ENCODE measurements at regions of chr5 and their contacts with region 1.

Region 1: DNA sequence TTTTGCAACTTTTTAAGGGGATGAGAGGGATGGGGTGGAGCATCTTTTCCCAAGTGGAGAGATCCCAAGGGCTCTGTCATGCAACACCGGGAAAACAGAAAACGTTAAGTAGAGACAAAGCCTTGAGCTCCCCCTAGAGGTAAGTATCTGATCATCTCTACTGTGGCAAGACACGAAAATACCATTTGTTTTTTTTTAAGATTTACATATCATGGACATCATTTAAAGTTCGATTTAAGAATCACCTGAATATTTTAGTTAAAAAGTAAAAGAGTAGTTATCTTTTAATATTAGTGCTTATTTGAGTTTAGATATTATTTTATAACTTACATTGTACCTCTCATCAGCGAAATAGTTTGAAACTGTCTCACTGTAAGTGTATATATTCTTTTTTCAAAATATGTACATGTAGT is 200.4 kb downstream of the LRRC70 start:
- DNase-seq: peak; percentile 30
- H3K4me3 Mint-ChIP-seq: no peak overlapping the region
- H3K27ac Mint-ChIP-seq: no peak overlapping the region
- H3K4me1 Mint-ChIP-seq: no peaks in the 10 kb centered on the region
- H3K27me3 Mint-ChIP-seq: no peaks in the 10 kb centered on the region
- CTCF ChIP-seq: peak; percentile 53

Region 2: DNA sequence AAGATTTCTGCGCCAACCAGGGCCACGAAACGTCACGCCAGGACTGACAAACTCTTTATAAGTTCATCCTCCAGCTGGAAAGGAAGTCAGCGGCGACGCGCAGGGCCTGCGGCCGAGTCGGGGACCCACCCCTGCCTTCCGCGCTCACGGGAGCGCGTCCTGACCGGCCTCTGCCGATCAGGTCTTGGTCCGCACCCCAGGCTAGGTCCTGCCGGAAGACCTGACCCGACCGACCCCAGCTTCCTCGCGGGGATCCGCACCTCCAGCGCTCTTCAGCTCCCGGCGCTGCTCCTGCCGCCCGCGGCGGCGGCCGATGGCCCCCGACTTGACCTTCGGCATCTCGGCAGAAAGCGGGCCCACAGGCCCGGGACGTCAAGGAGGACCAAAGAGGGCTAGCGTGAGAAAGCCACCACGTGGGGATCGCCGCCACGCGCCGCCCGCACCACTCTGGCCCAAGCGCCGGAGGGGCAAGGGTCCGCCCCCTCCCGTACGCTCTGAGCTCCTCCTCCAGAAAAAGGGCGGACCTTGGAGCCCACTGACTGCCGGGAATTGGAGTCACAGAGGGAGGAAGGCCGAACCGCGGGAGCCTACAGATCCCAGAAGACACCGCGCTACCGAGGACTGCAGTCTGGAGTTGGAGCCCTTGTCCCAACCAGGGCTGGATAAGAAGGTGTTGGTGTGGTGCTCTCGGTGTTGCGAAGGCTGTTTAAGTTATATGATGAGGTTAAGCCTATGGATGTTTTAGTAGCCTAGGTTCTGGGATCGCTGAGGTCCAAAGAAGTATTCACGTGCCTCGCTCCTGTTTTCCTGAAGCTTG is 375.4 kb before region 1 on chr5 and contains the start of gene DIMT1:
- CTCF ChIA-PET with region 1: interaction called, 10 read pairs
- intact Hi-C with region 1: no loop called
- DNase-seq: peak; percentile 95
- H3K4me3 Mint-ChIP-seq: peak within 1 kb of the TSS; percentile 99
- H3K27ac Mint-ChIP-seq: peak within 1 kb of the TSS; percentile 96
- H3K4me1 Mint-ChIP-seq: peaks cover 13% of the 10 kb centered on the region
- H3K27me3 Mint-ChIP-seq: no peaks in the 10 kb centered on the region
- CTCF ChIP-seq: no peak
- total RNA-seq, gene DIMT1: 34.4 and 41.1 TPM in 2 replicates

Region 3: DNA sequence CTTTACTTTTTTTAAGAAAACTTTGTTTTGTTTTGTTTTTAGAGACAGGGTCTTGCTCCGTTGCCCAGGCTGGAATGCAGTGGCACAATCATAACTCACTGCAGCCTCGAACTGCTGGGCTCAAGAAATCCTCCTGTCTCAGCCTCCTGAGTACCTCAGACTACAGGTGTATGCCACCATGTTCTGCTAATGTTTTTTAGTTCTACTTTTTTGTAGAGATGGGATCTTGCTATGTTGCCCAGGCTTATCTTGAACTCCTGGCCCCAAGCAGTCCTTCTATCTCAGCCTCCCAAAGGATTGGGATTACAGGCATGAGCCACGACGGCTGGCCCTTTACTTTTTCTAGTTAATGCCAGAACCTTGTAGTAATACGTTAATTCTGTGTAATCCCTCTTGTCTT is 330.5 kb before region 1 on chr5:
- CTCF ChIA-PET with region 1: interaction called, 3 read pairs
- intact Hi-C with region 1: loop called (anchors 1 kb)
- DNase-seq: no peak
- H3K4me3 Mint-ChIP-seq: no peak overlapping the region
- H3K27ac Mint-ChIP-seq: no peak overlapping the region
- H3K4me1 Mint-ChIP-seq: no peaks in the 10 kb centered on the region
- H3K27me3 Mint-ChIP-seq: no peaks in the 10 kb centered on the region
- CTCF ChIP-seq: no peak

Region 4: GRCh38 chr5:62460578-62460983 is 318.4 kb before region 1 on chr5:
- CTCF ChIA-PET with region 1: interaction called, 4 read pairs
- intact Hi-C with region 1: loop called (anchors 1 kb)
- DNase-seq: no peak
- H3K4me3 Mint-ChIP-seq: no peak overlapping the region
- H3K27ac Mint-ChIP-seq: no peak overlapping the region
- H3K4me1 Mint-ChIP-seq: no peaks in the 10 kb centered on the region
- H3K27me3 Mint-ChIP-seq: no peaks in the 10 kb centered on the region
- CTCF ChIP-seq: peak; percentile 66

Region 5: DNA sequence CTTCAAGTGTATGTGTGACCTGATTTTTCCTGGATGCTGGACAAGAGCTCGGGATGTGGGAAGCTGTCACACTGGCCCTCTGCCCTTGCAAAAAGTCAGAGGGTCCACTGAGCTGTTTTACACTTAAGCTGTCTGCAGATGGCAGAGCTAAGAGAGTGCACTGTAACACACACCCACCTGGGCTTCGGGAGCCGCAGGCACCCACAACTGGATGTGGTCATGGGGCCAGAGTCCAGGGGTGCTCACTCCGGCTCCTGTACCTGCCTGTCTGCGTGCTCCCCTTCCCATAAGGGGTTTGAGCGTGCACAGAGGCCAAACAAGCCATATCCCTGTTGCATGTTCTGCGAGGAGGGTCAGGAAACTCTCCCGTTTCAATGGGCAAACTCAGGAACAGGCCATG is 117.9 kb before region 1 on chr5:
- CTCF ChIA-PET with region 1: no interaction called
- intact Hi-C with region 1: no loop called
- DNase-seq: no peak
- H3K4me3 Mint-ChIP-seq: no peak overlapping the region
- H3K27ac Mint-ChIP-seq: no peak overlapping the region
- H3K4me1 Mint-ChIP-seq: no peaks in the 10 kb centered on the region
- H3K27me3 Mint-ChIP-seq: no peaks in the 10 kb centered on the region
- CTCF ChIP-seq: no peak

Region 6: GRCh38 chr5:62814991-62815390 is 36.0 kb after region 1 on chr5:
- CTCF ChIA-PET with region 1: no interaction called
- intact Hi-C with region 1: no loop called
- DNase-seq: no peak
- H3K4me3 Mint-ChIP-seq: no peak overlapping the region
- H3K27ac Mint-ChIP-seq: no peak overlapping the region
- H3K4me1 Mint-ChIP-seq: no peaks in the 10 kb centered on the region
- H3K27me3 Mint-ChIP-seq: no peaks in the 10 kb centered on the region
- CTCF ChIP-seq: no peak